H1 (cell line): ENCODE measurements at regions of chr15 and their contacts with region 1.

Region 1: DNA sequence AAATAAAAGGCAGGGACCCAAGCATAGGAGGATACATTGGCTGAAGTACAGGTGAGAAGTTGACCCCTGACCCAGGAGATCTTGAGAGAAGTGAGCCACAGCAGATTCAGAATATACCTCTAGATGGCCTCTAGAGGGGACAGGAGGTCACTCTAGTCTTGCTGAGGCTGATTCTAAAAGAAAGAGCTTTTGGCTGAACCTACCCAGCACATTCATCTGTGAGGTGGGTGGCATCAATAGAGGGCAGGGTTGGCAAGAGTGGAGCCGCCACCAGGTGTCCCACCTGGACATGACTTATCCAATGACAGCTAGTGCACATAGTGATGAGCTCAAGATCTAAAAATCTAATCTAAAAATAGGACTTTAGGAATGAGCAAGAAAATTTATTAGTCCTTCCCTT is 51.6 kb downstream of the CYP19A1 start:
- DNase-seq: no peak
- H3K4me3 ChIP-seq: no peak overlapping the region
- H3K27ac ChIP-seq: no peak overlapping the region
- H3K4me1 ChIP-seq: no peaks in the 10 kb centered on the region
- H3K27me3 ChIP-seq: no peaks in the 10 kb centered on the region
- CTCF ChIP-seq: peak; percentile 32 to 45 (median 34); a peak in 3 of 4 replicates
- EP300 ChIP-seq: no peak
- POLR2A ChIP-seq: no peak
- RAD21 ChIP-seq: peak; percentile 42 to 48; a peak in 3 of 4 replicates

Region 2: DNA sequence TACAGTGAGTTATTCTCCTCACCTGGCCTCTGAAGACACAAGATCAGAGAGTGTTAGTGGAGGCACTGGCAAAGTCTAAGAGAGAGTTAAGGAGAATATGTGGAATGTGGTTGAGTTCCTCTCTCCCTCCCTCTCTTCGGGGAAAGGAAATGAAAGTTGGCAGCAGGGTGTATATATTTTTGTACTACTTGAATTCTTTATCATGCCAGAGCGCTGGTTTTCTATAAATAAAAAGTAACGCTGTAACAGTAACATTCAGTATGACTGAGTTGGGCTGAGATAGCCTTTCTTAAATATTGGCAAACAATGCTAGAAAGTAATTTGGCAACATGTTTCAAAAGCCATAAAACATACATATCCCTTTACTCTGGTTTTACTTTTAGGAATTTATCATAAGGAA is 114.6 kb before region 1 on chr15:
- CTCF ChIA-PET with region 1: no interaction called
- POLR2A ChIA-PET with region 1: no interaction called
- DNase-seq: no peak
- H3K4me3 ChIP-seq: no peak overlapping the region
- H3K27ac ChIP-seq: no peak overlapping the region
- H3K4me1 ChIP-seq: no peaks in the 10 kb centered on the region
- H3K27me3 ChIP-seq: no peaks in the 10 kb centered on the region
- CTCF ChIP-seq: no peak
- EP300 ChIP-seq: no peak
- POLR2A ChIP-seq: no peak
- RAD21 ChIP-seq: no peak

Region 3: DNA sequence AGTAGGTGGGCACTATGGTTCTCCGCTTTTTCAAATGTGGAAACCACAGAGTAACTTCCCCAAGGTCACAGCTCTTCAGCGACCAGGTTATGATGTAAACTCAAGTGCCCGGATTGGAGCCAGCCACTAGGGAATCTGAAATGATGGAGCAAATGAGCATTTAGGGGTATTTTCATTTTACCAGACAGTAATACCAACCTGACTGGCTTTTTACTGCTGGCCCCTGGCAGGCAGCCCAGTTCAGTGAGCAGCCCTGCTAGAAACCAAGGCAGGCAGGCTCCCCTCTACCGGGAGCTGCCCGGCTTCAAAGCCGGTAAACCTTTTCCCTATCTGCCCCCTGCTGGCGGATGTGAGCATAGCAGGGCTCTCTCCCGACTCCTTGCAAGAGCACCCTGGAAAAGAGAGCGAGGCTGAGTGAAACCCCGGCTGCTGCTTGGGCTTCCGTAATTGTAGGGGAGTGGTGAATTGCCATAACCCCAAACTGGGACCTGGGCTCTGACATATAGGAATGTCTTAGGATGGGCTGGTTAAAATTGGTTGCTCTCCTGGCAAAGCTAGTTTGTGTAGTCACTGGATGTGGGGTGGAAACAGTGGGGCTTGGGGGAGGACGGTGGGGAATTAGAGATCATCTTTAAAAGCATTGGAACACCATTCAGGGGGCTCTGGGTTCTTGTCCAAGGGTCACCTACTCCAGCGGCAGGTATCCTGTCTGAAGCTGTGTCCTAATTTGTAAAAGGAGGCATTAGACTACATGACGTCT is 94.1 kb before region 1 on chr15:
- CTCF ChIA-PET with region 1: interaction called, 11 read pairs
- POLR2A ChIA-PET with region 1: no interaction called
- DNase-seq: peak; percentile 87 to 100
- H3K4me3 ChIP-seq: no peak overlapping the region
- H3K27ac ChIP-seq: no peak overlapping the region
- H3K4me1 ChIP-seq: no peaks in the 10 kb centered on the region
- H3K27me3 ChIP-seq: no peaks in the 10 kb centered on the region
- CTCF ChIP-seq: peak; percentile 80 to 92 (median 88)
- EP300 ChIP-seq: no peak
- POLR2A ChIP-seq: no peak
- RAD21 ChIP-seq: peak; percentile 78 to 81

Region 4: DNA sequence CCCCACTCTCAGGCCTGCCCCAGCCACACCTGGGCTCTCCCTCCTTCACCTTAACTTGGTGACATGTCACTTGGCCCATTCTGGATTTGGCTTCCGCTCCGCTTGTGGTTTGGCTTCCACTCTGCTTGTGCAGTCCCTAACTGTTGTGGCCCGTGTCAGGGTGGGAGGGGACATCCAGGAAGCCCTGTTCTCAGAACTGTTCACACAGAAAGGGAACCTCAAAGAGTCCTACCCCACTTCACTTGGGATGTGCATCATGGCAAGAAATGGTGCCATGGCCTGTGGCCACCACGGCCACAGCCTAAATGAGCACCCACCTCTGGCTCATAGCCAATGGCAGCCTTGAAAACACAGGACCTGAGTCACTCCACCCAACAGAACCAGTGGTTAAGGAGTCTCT is 11.8 kb before region 1 on chr15:
- CTCF ChIA-PET with region 1: interaction called, 18 read pairs
- POLR2A ChIA-PET with region 1: no interaction called
- DNase-seq: no peak
- H3K4me3 ChIP-seq: no peak overlapping the region
- H3K27ac ChIP-seq: no peak overlapping the region
- H3K4me1 ChIP-seq: no peaks in the 10 kb centered on the region
- H3K27me3 ChIP-seq: no peaks in the 10 kb centered on the region
- CTCF ChIP-seq: no peak
- EP300 ChIP-seq: no peak
- POLR2A ChIP-seq: no peak
- RAD21 ChIP-seq: no peak

Region 5: DNA sequence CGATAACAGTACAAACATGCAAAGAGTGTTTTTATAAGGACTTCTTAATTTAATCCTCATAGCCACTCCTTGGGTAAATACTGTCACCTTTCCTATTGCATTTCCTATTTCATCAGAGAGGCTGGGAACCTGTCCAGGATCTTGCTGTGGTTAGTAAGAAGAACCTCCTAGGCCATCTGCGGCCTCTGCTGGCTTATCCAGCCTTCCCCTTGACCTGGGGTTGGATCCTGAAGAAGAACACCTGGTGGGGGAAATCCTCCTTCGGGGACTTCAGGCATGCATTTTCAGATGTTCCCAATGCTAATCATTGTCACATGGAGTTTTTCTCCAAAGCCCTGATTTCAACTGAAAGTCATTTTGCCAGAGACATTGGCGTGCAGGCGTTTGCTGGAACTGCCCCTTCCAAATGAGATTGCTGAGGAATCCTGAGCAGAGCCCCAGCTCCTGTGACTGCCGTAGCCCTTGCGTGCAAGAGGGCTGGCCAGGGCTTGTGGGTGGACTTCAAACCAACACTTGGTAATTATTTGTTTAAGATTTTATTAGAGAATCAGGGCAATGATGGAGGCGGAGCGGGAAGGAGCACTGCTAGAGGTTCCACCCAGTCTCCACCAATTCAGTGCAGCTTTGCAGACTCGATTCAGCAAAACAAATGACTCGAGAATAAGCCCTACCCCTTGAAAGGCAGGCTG is 80.3 kb after region 1 on chr15:
- CTCF ChIA-PET with region 1: interaction called, 23 read pairs
- POLR2A ChIA-PET with region 1: no interaction called
- DNase-seq: no peak
- H3K4me3 ChIP-seq: no peak overlapping the region
- H3K27ac ChIP-seq: no peak overlapping the region
- H3K4me1 ChIP-seq: peaks cover 0 to 2% (median 0%) of the 10 kb centered on the region in 4 experiments; a peak in 1 of 7 replicates
- H3K27me3 ChIP-seq: no peaks in the 10 kb centered on the region; a peak in 1 of 7 replicates
- CTCF ChIP-seq: no peak
- EP300 ChIP-seq: no peak
- POLR2A ChIP-seq: no peak
- RAD21 ChIP-seq: no peak

Region 6: DNA sequence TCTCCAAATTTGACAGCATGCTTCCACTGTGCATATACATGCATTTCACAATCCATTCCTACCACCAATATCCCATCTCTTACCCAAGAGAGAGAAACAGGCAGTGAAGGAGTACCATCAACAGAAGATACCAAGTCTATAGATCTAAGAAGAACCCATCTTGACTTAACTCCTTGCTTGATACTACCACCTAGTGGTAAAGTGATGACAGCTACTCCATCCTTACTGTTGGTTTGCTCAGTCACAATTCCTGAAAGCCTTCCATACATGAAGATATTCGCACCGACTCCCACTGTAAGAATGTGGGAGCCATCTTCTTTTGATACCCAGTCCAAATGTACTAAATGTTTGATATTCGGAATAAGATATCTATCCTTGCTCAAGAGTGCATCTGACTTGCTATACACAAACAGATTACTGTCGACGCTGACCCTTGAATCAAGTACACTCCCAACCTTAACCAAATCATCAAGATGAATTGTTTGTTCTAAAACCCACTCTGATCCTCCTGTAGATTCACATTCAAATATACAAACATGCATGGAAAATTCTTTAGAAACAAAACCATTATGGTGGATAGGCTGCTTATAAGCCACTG is 212.7 kb after region 1 on chr15:
- CTCF ChIA-PET with region 1: interaction called, 13 read pairs
- POLR2A ChIA-PET with region 1: no interaction called
- DNase-seq: no peak
- H3K4me3 ChIP-seq: no peak overlapping the region
- H3K27ac ChIP-seq: no peak overlapping the region
- H3K4me1 ChIP-seq: no peaks in the 10 kb centered on the region
- H3K27me3 ChIP-seq: no peaks in the 10 kb centered on the region
- CTCF ChIP-seq: peak in 2 of 3 experiments; percentile 63 to 85; a peak in 3 of 4 replicates
- EP300 ChIP-seq: no peak
- POLR2A ChIP-seq: no peak
- RAD21 ChIP-seq: peak; percentile 81 to 83